ENCODE measurements at regions of chr4 and their contacts with region 1.

Region 1: DNA sequence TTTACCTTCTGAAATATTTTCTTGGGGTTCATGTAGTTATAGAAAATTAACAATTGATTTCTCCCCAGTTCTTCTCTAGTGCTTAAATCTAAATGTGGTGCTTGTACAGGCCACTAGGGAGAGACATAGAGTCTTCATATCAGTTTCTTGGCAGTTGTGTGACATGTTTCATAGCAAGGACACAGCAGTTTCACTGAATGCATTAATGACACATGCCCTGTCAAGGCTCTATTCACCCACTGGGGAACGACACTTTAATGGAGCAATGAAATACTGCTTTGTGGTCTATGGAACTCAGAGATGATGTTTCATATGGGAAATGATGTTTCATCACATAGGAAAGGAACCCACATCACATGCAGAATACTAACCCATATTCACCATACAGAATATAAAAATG is 2.8 kb downstream of the VEGFC start:
- DNase-seq: peak; percentile 81
- H3K4me3 ChIP-seq: peak overlapping the region in 2 of 3 experiments; percentile 99 to 100
- H3K27ac ChIP-seq: peak overlapping the region; percentile 23
- H3K4me1 ChIP-seq: peaks cover 39% of the 10 kb centered on the region
- H3K27me3 ChIP-seq: no peaks in the 10 kb centered on the region
- CTCF ChIP-seq: peak; percentile 59 to 60
- POLR2A ChIP-seq: no peak

Region 2: DNA sequence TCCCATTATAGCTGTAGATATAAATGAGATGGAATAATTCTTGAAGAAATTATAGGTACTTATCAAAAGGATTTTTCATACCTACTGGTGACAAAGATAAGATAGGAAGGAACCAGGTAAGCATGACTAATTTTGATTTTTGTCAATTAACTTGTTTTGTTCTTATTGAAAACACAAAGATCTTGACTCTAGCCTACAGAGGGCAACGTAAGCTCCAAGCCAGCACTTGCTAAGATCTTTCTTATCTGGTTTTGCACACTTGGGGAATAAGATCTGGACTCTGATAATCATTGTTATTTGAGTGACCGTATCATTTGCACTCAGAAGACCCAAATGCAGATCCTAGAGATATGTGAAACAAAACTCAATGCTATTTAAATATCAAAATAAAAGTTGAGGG is 220.7 kb before region 1 on chr4:
- CTCF ChIA-PET with region 1: no interaction called
- POLR2A ChIA-PET with region 1: no interaction called
- dilution Hi-C with region 1: no loop called
- intact Hi-C with region 1: loop called (anchors 5 kb)
- DNase-seq: peak; percentile 15
- H3K4me3 ChIP-seq: no peak overlapping the region
- H3K27ac ChIP-seq: no peak overlapping the region
- H3K4me1 ChIP-seq: peaks cover 3% of the 10 kb centered on the region
- H3K27me3 ChIP-seq: peaks cover 2 to 7% of the 10 kb centered on the region in 2 experiments
- CTCF ChIP-seq: no peak
- POLR2A ChIP-seq: no peak

Region 3: DNA sequence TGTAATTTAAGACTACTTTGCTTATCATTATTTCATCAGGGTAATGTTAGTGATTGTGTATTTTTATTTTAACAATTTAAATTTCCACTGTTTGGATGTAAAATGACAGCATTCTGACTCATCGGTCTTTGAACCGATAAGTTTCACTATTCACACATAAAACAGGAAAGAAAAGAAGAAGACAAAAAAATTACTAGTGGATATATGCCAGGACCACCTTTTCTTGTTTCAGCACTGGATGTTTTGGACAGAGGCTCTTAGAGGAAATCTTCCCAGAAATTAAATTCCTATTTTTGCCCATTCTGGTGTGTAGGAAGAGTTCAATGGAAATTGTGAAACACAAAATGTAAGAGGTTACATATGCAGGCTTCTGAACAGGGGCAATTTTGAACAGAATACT is 54.7 kb before region 1 on chr4:
- CTCF ChIA-PET with region 1: no interaction called
- POLR2A ChIA-PET with region 1: no interaction called
- dilution Hi-C with region 1: no loop called
- intact Hi-C with region 1: no loop called
- DNase-seq: peak; percentile 58
- H3K4me3 ChIP-seq: no peak overlapping the region
- H3K27ac ChIP-seq: no peak overlapping the region
- H3K4me1 ChIP-seq: peaks cover 6% of the 10 kb centered on the region
- H3K27me3 ChIP-seq: no peaks in the 10 kb centered on the region
- CTCF ChIP-seq: no peak
- POLR2A ChIP-seq: no peak

Region 4: DNA sequence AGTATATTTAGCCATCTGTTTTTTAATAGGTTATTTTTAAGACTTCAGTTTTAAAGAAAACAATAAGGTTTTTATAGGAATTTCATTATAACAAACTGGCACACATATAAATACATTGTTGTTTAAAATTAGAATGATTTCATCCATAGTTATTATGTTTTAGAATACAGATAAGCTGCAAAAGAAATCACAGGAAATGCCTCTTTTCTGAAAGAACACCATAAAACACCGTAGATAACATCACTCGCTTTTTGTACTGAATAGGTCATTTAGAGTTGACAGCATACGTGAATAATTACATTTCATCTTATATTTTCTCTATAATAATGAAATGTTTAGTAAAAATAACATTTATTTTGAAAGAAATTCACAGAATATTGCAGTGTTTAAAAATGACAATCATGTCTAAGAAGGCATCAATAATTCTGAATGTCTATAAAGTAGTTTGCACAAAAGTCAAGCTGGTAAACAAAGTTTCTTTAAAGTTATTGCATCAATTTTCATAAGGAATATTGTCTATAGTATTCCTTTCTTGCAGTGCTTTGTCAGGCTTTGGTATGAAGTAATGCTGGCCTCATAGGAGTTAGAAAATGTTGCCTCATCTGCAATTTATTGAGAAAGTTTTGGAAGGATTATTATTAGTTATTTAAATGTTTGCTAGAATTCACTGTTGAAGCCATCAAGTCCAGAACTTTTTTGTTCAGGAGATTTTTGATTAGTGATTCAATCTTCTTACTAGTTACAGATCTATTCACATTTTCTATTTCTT is 20.7 kb after region 1 on chr4:
- CTCF ChIA-PET with region 1: no interaction called
- POLR2A ChIA-PET with region 1: no interaction called
- dilution Hi-C with region 1: no loop called
- intact Hi-C with region 1: loop called (anchors 1 kb)
- DNase-seq: peak; percentile 73
- H3K4me3 ChIP-seq: no peak overlapping the region
- H3K27ac ChIP-seq: peak overlapping the region; percentile 44
- H3K4me1 ChIP-seq: peaks cover 21% of the 10 kb centered on the region
- H3K27me3 ChIP-seq: no peaks in the 10 kb centered on the region
- CTCF ChIP-seq: no peak
- POLR2A ChIP-seq: no peak

Region 5: GRCh38 chr4:176883681-176884418 is 93.9 kb after region 1 on chr4:
- CTCF ChIA-PET with region 1: interaction called, 4 read pairs
- POLR2A ChIA-PET with region 1: no interaction called
- dilution Hi-C with region 1: no loop called
- intact Hi-C with region 1: loop called (anchors 1 kb)
- DNase-seq: peak; percentile 76
- H3K4me3 ChIP-seq: peak overlapping the region in 1 of 3 experiments; percentile 33
- H3K27ac ChIP-seq: peak overlapping the region; percentile 86
- H3K4me1 ChIP-seq: peaks cover 35% of the 10 kb centered on the region
- H3K27me3 ChIP-seq: no peaks in the 10 kb centered on the region
- CTCF ChIP-seq: no peak
- POLR2A ChIP-seq: no peak

Region 6: GRCh38 chr4:176920694-176921093 is 130.7 kb after region 1 on chr4:
- CTCF ChIA-PET with region 1: interaction called, 6 read pairs
- POLR2A ChIA-PET with region 1: no interaction called
- dilution Hi-C with region 1: no loop called
- intact Hi-C with region 1: loop called (anchors 1 kb)
- DNase-seq: peak; percentile 91
- H3K4me3 ChIP-seq: peak overlapping the region in 1 of 3 experiments; percentile 41
- H3K27ac ChIP-seq: peak overlapping the region; percentile 66
- H3K4me1 ChIP-seq: peaks cover 43% of the 10 kb centered on the region
- H3K27me3 ChIP-seq: no peaks in the 10 kb centered on the region
- CTCF ChIP-seq: no peak
- POLR2A ChIP-seq: no peak

Region 7: GRCh38 chr4:177128306-177128705 is 338.4 kb after region 1 on chr4:
- CTCF ChIA-PET with region 1: no interaction called
- POLR2A ChIA-PET with region 1: no interaction called
- dilution Hi-C with region 1: no loop called
- intact Hi-C with region 1: loop called (anchors 5 kb)
- DNase-seq: peak; percentile 77
- H3K4me3 ChIP-seq: peak overlapping the region in 1 of 3 experiments; percentile 10
- H3K27ac ChIP-seq: peak overlapping the region; percentile 77
- H3K4me1 ChIP-seq: peaks cover 19% of the 10 kb centered on the region
- H3K27me3 ChIP-seq: no peaks in the 10 kb centered on the region
- CTCF ChIP-seq: no peak
- POLR2A ChIP-seq: no peak

Region 8: DNA sequence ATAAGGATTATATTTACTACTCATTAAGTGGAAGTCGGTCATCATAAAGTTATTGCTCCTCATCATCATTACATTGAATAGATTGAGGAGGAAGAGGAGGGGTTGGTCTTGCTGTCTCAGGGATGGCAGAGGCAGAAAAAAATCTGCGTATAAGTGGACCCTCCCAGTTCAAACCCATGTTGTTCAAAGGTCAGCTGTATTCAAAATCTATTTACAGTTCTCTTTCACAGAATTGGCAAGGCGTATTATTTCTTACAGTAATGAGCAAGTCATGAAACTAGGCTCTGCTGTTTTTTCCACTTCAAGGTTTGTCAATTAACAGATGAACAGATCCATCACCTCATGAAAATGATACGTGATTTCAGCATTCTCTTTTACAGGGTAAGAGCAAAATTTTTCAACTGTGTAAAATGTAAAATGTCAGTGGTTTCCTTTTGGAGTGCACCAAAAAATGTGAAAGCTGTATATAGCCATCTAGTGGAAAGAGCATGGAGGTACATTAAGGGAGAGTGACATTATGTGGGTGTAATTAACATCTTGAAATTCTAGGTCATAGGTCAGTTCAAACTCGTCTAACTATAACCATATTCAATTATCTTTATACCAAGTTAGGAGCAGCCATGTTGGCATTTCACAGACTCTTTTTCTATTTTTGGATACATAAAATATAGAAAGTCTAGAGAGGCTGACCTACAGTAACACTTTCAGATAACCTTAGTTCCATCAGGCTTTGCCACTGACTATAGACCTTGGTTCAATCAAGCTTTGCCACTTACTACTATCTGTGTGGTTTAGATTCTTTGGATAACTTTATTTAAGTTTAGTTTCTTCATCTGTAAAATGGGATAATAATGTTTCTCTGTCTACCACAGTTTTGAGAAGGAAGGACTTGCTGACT is 549.8 kb after region 1 on chr4:
- CTCF ChIA-PET with region 1: no interaction called
- POLR2A ChIA-PET with region 1: no interaction called
- dilution Hi-C with region 1: no loop called
- intact Hi-C with region 1: loop called (anchors 2 kb)
- DNase-seq: peak; percentile 57
- H3K4me3 ChIP-seq: no peak overlapping the region
- H3K27ac ChIP-seq: no peak overlapping the region
- H3K4me1 ChIP-seq: no peaks in the 10 kb centered on the region
- H3K27me3 ChIP-seq: no peaks in the 10 kb centered on the region
- CTCF ChIP-seq: peak; percentile 38 to 51
- POLR2A ChIP-seq: no peak

Measured in endothelial cell of umbilical vein (primary cell).